Activated naive CD4-positive, alpha-beta T cell treated with anti-CD3 and anti-CD28 coated beads for 36 hours (primary cell): ENCODE measurements at regions of chr7 and their contacts with region 1.

Region 1: DNA sequence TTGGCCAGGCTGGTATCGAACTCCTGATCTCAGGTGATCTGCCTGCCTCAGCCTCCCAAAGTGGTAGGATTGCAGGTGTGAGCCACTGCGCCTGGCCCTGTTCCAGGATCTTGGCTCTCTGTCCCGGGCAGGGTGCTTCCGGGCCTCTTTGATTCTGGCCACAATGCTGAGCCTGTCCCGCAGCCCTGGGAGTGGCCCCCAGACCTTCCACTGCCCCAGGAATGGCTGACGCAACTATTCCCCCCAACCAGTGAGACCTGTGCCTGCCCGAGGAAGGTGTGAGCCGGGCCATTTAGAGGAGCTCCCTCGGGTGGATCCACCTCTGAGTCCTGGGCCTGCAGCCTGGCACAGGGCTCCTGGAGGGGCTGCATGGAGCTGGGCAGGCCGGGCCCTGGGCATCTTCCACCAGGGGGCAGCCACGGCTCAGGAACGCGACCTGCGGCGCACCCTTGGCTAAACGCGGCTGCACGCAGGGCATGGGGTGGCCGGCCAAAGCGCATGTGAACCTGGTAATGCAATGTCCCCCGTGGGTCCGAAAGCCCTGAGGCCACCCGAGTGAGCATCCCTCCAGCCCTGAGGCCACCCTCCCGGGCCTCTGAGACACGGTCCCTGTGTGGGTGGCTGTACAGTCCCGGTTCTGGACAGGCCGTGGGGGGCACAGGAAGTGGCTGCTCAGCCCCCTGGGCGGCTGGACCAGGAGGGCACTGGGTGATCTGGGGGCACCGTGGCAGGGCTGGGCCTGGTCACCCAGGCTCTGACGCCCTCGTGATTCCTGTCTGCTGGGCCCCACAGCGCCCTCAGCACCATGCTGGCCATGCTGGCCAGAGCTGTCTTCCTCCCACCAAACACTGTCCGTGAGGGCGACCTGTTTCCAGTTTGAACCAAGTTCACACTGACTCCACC is 24.8 kb downstream of the GRIFIN start:
- DNase-seq: peak; percentile 88
- H3K4me3 Mint-ChIP-seq: no peak overlapping the region
- H3K27ac Mint-ChIP-seq: no peak overlapping the region
- H3K4me1 Mint-ChIP-seq: peaks cover 6% of the 10 kb centered on the region
- H3K27me3 Mint-ChIP-seq: no peaks in the 10 kb centered on the region

Region 2: DNA sequence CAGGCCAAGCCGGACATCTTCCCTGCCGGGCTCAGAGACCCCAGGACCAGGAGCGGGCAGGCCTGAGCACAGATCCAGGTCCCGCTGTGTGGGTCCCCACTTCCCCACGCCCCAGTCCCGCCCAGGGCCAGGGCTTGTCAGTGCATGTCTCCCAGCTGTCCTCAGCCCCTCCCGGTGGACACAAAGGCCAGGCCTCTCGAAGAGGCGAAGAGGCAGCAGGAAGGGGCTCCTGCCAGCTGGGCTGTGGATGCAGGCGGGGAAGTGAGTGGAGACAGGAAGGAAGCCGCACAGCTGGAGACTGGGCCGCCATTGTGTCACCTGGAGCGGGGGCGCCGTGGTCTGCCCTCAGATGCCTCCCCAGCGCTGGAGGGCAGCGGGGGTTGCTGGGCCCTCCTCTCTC is 20.0 kb after region 1 on chr7:
- CTCF ChIA-PET with region 1: interaction called, 71 read pairs
- intact Hi-C with region 1: loop called (anchors 1 kb)
- DNase-seq: no peak
- H3K4me3 Mint-ChIP-seq: no peak overlapping the region
- H3K27ac Mint-ChIP-seq: no peak overlapping the region
- H3K4me1 Mint-ChIP-seq: peaks cover 4% of the 10 kb centered on the region
- H3K27me3 Mint-ChIP-seq: peaks cover 6% of the 10 kb centered on the region

Region 3: GRCh38 chr7:2567679-2568278 is 116.4 kb after region 1 on chr7:
- CTCF ChIA-PET with region 1: interaction called, 3 read pairs
- intact Hi-C with region 1: loop called (anchors 5 kb)
- DNase-seq: no peak
- H3K4me3 Mint-ChIP-seq: no peak overlapping the region
- H3K27ac Mint-ChIP-seq: no peak overlapping the region
- H3K4me1 Mint-ChIP-seq: peaks cover 8% of the 10 kb centered on the region
- H3K27me3 Mint-ChIP-seq: no peaks in the 10 kb centered on the region

Region 4: DNA sequence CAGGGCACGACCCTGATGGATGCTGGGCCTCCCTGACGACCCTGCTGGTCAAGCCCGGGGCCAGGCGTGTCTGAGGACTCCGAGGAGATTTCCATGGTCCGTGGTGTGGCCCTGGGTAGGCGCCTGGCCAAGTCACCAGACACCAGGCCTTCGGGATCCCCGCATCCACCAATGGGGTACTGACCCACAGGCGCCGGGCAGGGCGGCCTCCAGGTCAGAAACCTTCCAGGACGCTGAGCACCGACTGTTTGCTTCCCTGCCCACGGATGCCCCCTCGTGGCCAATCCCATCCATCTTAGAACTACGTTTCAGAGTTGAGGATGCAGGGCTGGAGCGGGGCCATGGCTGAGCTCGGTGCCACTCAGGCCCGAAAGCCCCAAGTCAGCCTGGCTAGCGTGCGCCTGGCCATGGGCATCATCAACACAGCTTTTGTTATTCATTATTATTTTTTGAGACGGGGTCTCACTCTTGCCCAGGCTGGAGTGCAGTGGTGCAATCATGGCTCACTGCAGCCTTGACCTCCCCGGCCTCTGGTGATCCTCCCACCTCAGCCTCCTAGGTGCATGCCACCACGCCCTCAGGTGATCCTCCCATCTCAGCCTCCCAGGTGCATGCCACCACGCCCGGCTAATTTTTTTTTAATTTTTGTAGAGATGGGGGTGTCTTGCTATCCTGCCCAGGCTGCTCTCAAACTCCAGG is 229.5 kb after region 1 on chr7:
- CTCF ChIA-PET with region 1: interaction called, 17 read pairs
- intact Hi-C with region 1: loop called (anchors 1 kb)
- DNase-seq: peak; percentile 72
- H3K4me3 Mint-ChIP-seq: no peak overlapping the region
- H3K27ac Mint-ChIP-seq: no peak overlapping the region
- H3K4me1 Mint-ChIP-seq: no peaks in the 10 kb centered on the region
- H3K27me3 Mint-ChIP-seq: peaks cover 1% of the 10 kb centered on the region

Region 5: DNA sequence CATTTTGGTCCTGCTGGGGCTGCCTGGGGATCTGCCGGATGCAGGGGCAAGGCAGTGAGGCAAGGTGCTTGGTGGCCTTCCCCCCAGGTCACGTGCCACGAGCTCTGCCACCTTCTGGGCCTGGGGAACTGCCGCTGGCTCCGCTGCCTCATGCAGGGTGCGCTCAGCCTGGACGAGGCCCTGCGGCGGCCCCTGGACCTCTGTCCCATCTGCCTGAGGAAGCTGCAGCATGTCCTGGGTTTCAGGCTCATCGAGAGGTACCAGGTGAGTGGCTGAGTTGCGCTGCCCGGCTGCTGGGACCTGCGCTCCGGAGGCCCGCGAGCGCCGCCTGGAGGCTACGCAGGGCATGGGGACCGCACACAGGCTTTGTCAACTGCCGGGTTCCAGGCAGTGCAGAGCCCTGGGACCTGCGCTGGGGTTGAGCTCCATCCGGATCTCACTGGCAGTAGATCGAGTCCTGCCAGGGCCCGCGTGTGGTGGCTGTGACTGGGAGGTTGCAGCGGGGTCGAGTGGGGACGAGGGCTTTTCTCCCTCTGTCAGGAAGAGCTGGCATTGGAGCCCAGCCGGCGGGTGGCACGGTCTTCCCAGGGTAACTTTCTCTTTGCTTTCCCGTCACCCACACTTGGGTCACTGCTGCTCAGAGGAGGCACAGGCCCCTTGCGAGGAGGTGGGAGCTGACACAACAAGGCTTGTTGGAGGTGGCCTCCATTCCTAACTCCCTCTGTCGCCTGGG is 258.3 kb after region 1 on chr7:
- CTCF ChIA-PET with region 1: interaction called, 28 read pairs
- intact Hi-C with region 1: loop called (anchors 1 kb)
- DNase-seq: peak; percentile 84
- H3K4me3 Mint-ChIP-seq: peak overlapping the region; percentile 57
- H3K27ac Mint-ChIP-seq: peak overlapping the region; percentile 63
- H3K4me1 Mint-ChIP-seq: peaks cover 26% of the 10 kb centered on the region
- H3K27me3 Mint-ChIP-seq: peaks cover under 1% of the 10 kb centered on the region